CD4-positive, alpha-beta memory T cell (primary cell): ENCODE measurements at regions of chr5 and their contacts with region 1.

Region 1: GRCh38 chr5:141960449-141961202 is 2.6 kb upstream of the PCDH12 start:
- DNase-seq: peak; percentile 85 to 89 (median 88)
- H3K4me3 ChIP-seq: no peak overlapping the region
- H3K4me3 Mint-ChIP-seq: peak overlapping the region in 7 of 8 donors; percentile 33 to 66 (median 57)
- H3K27ac ChIP-seq: peak overlapping the region; percentile 22
- H3K27ac Mint-ChIP-seq: peak overlapping the region; percentile 69 to 92 (median 87)
- H3K4me1 ChIP-seq: peaks cover 45% of the 10 kb centered on the region
- H3K4me1 Mint-ChIP-seq: peaks cover 28 to 45% (median 38%) of the 10 kb centered on the region in 4 donors
- H3K27me3 ChIP-seq: no peaks in the 10 kb centered on the region
- H3K27me3 Mint-ChIP-seq: no peaks in the 10 kb centered on the region

Region 2: DNA sequence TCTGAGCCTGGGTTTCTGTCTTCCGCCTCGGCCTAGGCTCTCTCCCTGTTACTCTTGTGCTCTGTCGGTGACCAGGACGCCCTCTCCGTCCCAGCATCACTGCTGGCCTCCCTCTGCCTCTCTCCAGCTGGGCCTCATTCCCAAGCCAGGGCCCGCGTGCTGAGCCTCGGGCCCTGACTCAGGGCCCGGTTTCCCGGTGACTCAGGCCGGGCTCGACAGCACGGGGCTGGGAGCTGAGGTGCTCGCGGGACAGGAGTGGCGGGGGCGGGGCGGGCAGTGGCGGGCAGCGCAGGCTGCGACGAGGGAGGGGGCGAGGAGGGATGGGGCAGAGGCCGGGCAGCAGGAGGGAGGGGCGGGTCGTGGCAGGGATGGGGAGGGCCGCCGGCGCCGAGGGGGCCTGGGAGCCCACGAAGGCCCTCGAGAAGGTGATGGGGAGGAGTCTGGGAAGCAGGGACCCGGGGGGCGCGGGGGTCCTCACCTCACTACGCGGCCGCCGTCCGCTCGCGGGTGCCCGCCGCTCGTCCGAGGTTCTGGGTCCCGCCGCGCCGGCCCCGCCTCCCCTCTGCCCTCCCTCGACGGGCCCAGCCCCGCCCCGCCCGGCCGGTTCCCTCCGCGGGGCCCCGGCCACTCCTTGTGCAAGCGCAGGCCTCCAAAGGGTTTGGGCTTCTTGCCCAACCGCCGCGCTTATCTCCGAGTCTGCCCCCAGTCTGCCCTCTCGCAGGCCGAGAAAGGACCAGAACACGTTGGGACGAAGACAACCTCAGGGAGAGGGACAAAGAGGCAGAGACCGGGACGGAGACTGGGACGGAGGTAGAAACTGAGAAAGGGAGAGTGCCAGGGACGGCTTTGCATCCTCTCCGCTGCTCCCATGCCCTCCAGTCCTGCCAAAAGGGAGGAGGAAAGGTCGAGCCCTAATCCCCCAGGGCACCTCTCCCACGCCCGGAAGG is 278.7 kb before region 1 on chr5 and contains the start of gene ARAP3:
- CTCF ChIA-PET with region 1: interaction called, 12 read pairs
- POLR2A ChIA-PET with region 1: interaction called, 23 read pairs
- intact Hi-C with region 1: no loop called
- DNase-seq: peak in 2 of 5 donors; percentile 24 to 47
- H3K4me3 ChIP-seq: peak within 1 kb of the TSS in 1 of 2 donors; percentile 17
- H3K4me3 Mint-ChIP-seq: peak within 1 kb of the TSS; percentile 78 to 86 (median 83)
- H3K27ac ChIP-seq: no peak within 1 kb of the TSS
- H3K27ac Mint-ChIP-seq: peak within 1 kb of the TSS; percentile 47 to 91 (median 77)
- H3K4me1 ChIP-seq: peaks cover 33% of the 10 kb centered on the region
- H3K4me1 Mint-ChIP-seq: peaks cover 14 to 36% (median 26%) of the 10 kb centered on the region in 4 donors
- H3K27me3 ChIP-seq: no peaks in the 10 kb centered on the region
- H3K27me3 Mint-ChIP-seq: peaks cover 0 to 2% of the 10 kb centered on the region in 2 donors
- total RNA-seq, gene ARAP3: 14.7 to 16.4 TPM

Region 3: DNA sequence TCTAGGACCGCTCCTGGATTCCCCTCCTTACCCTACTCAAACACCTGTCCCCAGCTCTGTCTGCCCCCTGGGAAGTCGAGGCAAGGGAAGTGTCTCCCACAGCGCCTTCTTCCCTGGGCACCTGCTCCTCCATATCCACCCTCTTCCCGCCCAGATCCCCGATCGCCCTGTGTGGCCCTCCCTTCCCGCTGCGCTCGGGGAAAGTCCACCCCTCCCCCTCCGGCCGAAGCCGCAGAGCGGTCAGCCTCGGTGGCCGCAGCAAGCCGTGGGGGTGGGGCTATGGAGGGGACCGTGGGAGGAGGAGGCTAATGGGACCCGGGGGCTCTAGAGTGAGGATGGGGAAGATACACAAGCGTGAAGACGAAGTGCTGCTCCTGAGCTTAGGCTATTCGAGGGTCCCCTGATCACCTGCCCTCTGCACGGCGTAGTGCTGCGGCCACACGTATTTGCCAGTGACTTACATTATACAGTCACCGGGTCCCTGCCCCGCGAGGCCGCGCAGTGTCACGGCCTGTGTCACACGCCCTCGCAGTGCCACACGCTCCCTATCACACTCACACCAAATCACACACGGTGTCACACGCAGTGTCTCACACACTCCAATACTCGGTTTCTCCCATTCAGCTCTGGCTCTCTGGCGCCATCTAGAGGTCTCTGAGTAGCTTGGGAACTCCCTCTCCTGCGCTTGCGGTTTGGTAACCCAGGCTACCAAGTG is 81.8 kb before region 1 on chr5:
- CTCF ChIA-PET with region 1: interaction called, 119 read pairs
- POLR2A ChIA-PET with region 1: interaction called, 32 read pairs
- intact Hi-C with region 1: loop called (anchors 1 kb)
- DNase-seq: peak; percentile 88 to 93 (median 90)
- H3K4me3 ChIP-seq: peak overlapping the region; percentile 53 to 76
- H3K4me3 Mint-ChIP-seq: peak overlapping the region; percentile 78 to 92 (median 86)
- H3K27ac ChIP-seq: no peak overlapping the region
- H3K27ac Mint-ChIP-seq: peak overlapping the region; percentile 31 to 88 (median 62)
- H3K4me1 ChIP-seq: peaks cover 40% of the 10 kb centered on the region
- H3K4me1 Mint-ChIP-seq: peaks cover 20 to 49% (median 28%) of the 10 kb centered on the region in 4 donors
- H3K27me3 ChIP-seq: peaks cover 60% of the 10 kb centered on the region
- H3K27me3 Mint-ChIP-seq: peaks cover 54 to 63% of the 10 kb centered on the region in 2 donors

Region 4: DNA sequence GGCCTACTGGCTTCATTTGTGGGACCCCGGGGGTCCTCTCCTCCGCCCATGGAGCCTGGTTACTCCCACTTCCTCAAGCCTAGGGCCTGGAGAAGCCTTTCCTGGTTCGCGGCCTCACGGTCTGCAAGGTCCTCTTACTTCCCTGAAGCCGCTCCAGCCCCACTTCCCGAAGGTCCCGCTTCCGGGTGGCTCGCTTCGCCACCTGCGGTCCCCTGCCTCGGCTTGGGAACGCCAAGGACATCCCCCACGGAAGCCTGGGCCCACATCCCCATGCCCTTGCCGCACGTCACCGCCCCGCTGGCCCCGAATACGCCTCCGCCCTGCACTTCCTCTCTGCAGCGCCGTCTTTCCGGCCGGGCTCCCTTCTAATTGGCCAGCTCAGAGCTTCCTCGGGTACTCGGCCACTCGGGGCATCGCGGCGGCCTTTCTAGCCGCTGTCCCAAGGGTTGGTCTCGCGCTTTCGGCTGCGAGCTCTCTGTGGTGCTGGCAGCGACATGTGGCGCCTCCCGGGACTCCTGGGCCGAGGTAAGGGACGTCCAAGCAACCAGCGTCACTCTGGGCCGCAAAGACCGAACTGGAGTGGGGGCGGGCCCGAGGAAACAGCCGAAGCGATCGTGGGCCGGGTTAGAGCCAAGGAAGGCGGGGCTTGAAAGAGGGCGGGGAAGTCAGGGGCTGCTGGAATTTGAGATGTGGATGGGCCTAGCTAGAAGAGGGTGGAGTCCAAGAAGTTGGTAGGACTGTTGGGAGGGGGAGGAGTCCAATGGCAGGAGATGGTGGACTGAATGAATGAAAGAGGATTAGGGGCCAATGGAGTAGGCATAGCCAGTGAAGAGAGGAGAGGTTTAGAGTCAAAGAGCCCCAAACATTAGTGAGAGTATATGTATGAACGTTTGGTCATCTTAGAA is 36.9 kb before region 1 on chr5 and contains the start of gene DELE1:
- CTCF ChIA-PET with region 1: interaction called, 31 read pairs
- POLR2A ChIA-PET with region 1: interaction called, 36 read pairs
- intact Hi-C with region 1: loop called (anchors 1 kb)
- DNase-seq: peak; percentile 89 to 92 (median 92)
- H3K4me3 ChIP-seq: peak within 1 kb of the TSS; percentile 76 to 93
- H3K4me3 Mint-ChIP-seq: peak within 1 kb of the TSS; percentile 87 to 97 (median 92)
- H3K27ac ChIP-seq: peak within 1 kb of the TSS; percentile 99
- H3K27ac Mint-ChIP-seq: peak within 1 kb of the TSS; percentile 95 to 98 (median 97)
- H3K4me1 ChIP-seq: peaks cover 31% of the 10 kb centered on the region
- H3K4me1 Mint-ChIP-seq: peaks cover 14 to 48% (median 34%) of the 10 kb centered on the region in 4 donors
- H3K27me3 ChIP-seq: no peaks in the 10 kb centered on the region
- H3K27me3 Mint-ChIP-seq: no peaks in the 10 kb centered on the region
- total RNA-seq, gene DELE1: 73.2 to 83.1 TPM

Region 5: GRCh38 chr5:141976176-141976575 is 15.6 kb after region 1 on chr5:
- CTCF ChIA-PET with region 1: interaction called, 139 read pairs
- POLR2A ChIA-PET with region 1: interaction called, 5 read pairs
- intact Hi-C with region 1: no loop called
- DNase-seq: no peak
- H3K4me3 ChIP-seq: no peak overlapping the region
- H3K4me3 Mint-ChIP-seq: no peak overlapping the region
- H3K27ac ChIP-seq: no peak overlapping the region
- H3K27ac Mint-ChIP-seq: peak overlapping the region in 2 of 7 donors; percentile 43 to 61
- H3K4me1 ChIP-seq: peaks cover 8% of the 10 kb centered on the region
- H3K4me1 Mint-ChIP-seq: peaks cover 15 to 27% (median 19%) of the 10 kb centered on the region in 4 donors
- H3K27me3 ChIP-seq: no peaks in the 10 kb centered on the region
- H3K27me3 Mint-ChIP-seq: no peaks in the 10 kb centered on the region

Region 6: DNA sequence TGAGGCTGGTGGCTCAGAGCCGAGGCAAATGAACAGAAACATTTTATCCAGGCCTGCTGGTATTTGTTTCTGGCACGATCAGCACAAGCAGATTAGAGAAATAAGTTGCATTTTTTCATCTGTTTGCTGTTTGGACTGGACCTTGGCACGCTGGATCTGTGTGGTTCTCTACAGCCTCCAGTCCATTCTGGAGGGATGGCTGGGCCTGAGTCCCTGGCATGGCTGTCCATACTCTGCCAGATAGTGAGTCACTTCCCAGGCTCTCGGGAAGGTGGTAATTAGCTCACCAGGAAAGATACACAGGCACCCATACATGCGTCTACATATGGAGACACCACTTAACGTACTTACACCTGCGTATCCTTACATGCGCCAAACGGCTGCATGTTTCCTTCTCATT is 285.6 kb after region 1 on chr5:
- CTCF ChIA-PET with region 1: no interaction called
- POLR2A ChIA-PET with region 1: no interaction called
- intact Hi-C with region 1: no loop called
- DNase-seq: no peak
- H3K4me3 ChIP-seq: no peak overlapping the region
- H3K4me3 Mint-ChIP-seq: no peak overlapping the region
- H3K27ac ChIP-seq: no peak overlapping the region
- H3K27ac Mint-ChIP-seq: no peak overlapping the region
- H3K4me1 ChIP-seq: no peaks in the 10 kb centered on the region
- H3K4me1 Mint-ChIP-seq: peaks cover 0 to 2% (median under 1%) of the 10 kb centered on the region in 4 donors
- H3K27me3 ChIP-seq: no peaks in the 10 kb centered on the region
- H3K27me3 Mint-ChIP-seq: peaks cover 3% of the 10 kb centered on the region in 2 donors